WTC11 (cell line): ENCODE measurements at regions of chr4 and their contacts with region 1.

Region 1: GRCh38 chr4:21790438-21791029 is 158.0 kb downstream of the KCNIP4 start:
- DNase-seq: no peak
- ATAC-seq: no peak
- H3K4me3 Mint-ChIP-seq: no peak overlapping the region
- H3K27ac Mint-ChIP-seq: no peak overlapping the region
- H3K4me1 Mint-ChIP-seq: peaks cover 7% of the 10 kb centered on the region
- H3K27me3 Mint-ChIP-seq: no peaks in the 10 kb centered on the region
- CTCF ChIP-seq: peak; percentile 63

Region 2: GRCh38 chr4:21780158-21780557 is 10.4 kb before region 1 on chr4:
- CTCF ChIA-PET with region 1: interaction called, 16 read pairs
- POLR2A ChIA-PET with region 1: no interaction called
- DNase-seq: no peak
- ATAC-seq: no peak
- H3K4me3 Mint-ChIP-seq: no peak overlapping the region
- H3K27ac Mint-ChIP-seq: no peak overlapping the region
- H3K4me1 Mint-ChIP-seq: no peaks in the 10 kb centered on the region
- H3K27me3 Mint-ChIP-seq: no peaks in the 10 kb centered on the region
- CTCF ChIP-seq: no peak

Region 3: GRCh38 chr4:22090661-22091351 is 300.3 kb after region 1 on chr4:
- CTCF ChIA-PET with region 1: interaction called, 20 read pairs
- POLR2A ChIA-PET with region 1: interaction called, 4 read pairs
- DNase-seq: no peak
- ATAC-seq: no peak
- H3K4me3 Mint-ChIP-seq: no peak overlapping the region
- H3K27ac Mint-ChIP-seq: no peak overlapping the region
- H3K4me1 Mint-ChIP-seq: no peaks in the 10 kb centered on the region
- H3K27me3 Mint-ChIP-seq: 0 out of 2 replicates have a peak, but pooled peaks cover 2% of the 10 kb centered on the region
- CTCF ChIP-seq: no peak

Region 4: DNA sequence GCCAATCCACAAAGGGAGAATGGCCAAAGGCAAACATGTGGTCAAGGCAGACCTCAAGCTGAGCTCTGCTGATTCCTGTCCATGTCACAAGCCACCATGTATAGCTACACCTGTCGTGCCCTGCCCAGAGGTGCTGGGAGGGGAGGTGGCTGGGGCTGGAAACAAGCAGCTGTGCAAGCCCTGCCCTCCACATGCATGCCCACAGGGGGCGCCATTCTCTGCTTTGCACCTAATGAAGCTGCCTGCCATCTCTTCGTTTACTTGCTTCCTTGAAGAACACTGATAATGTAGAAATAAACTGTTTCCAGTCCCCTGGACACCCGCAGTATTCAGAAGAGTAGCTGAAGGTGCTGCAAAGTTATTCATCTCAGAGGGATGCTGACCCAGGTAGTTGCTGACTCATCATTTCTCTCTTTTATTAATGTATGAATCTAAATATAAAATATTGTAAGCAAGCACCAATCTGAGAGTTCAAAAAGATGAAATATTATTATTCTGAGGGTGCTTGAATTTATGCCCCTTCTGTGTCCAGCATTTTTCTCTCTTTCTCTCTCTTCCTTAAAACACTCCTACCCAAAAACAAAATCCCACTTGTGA is 446.7 kb after region 1 on chr4:
- CTCF ChIA-PET with region 1: interaction called, 38 read pairs
- POLR2A ChIA-PET with region 1: no interaction called
- DNase-seq: peak; percentile 91
- ATAC-seq: peak; percentile 88
- H3K4me3 Mint-ChIP-seq: no peak overlapping the region
- H3K27ac Mint-ChIP-seq: no peak overlapping the region
- H3K4me1 Mint-ChIP-seq: peaks cover 37% of the 10 kb centered on the region
- H3K27me3 Mint-ChIP-seq: no peaks in the 10 kb centered on the region
- CTCF ChIP-seq: peak; percentile 94

Region 5: DNA sequence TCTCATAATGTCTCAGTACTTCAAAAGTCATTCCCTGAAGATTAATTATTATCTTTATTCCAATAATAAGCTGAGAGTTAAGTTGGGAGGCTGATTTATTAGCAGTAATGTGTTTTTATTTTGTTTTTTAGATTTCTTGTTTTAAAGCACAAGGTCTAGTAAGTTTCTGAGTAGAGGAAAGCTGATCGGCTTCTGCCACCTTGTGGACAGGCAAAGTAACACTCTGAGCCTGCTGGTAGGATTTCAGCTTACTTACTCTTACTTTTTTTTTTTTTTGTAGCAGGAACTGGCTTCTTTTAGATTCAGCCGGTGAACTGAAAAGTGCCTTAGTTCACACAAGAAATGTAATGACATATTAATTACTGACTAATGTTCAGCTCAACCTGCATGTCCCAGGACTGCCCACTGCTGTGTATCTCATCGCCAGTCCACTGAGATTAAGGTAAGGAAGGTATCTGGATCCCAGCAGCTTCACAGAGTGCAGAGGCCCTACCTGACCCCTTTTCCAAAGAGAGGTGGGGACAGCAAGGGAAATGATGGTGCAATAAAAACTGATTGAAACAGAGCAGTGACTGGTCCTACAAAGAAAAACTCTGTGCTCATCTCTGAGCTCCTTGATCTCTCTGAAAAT is 598.8 kb after region 1 on chr4:
- CTCF ChIA-PET with region 1: interaction called, 94 read pairs
- POLR2A ChIA-PET with region 1: interaction called, 3 read pairs
- DNase-seq: peak; percentile 57
- ATAC-seq: peak; percentile 74
- H3K4me3 Mint-ChIP-seq: no peak overlapping the region
- H3K27ac Mint-ChIP-seq: peak overlapping the region; percentile 78; the same call in 1 of the 2 replicates
- H3K4me1 Mint-ChIP-seq: peaks cover 5% of the 10 kb centered on the region; the same call in 1 of the 2 replicates
- H3K27me3 Mint-ChIP-seq: no peaks in the 10 kb centered on the region
- CTCF ChIP-seq: peak; percentile 61